Aorta (tissue), 5 donors: ENCODE measurements at regions of chr2 and their contacts with region 1.

Region 1: DNA sequence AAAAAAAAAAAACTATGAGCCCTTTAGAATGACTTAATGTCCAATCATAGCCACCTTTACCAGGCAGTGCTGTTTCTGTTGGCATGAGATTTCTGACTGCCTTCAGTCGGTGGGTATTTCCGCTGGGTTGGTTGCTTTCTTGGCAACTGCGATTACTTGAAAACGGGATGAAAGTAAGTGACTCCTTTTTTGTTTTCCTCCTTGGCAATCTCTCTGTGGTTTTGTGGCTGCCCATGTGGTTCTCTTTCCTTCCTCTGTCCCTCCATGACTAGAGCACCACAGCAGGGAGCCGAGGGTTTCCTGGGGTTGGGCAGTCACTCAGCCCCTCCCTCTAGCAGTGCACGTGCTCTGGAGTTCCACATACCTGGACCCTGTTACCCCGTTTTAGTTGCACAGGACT is 112.1 kb downstream of the KLHL29 start:
- DNase-seq: peak; percentile 70
- ATAC-seq: peak; percentile 62
- H3K4me3 ChIP-seq: no peak overlapping the region
- H3K27ac ChIP-seq: peak overlapping the region in 1 of 2 donors; percentile 72
- H3K4me1 ChIP-seq: peaks cover 0 to 14% of the 10 kb centered on the region in 2 donors
- H3K27me3 ChIP-seq: no peaks in the 10 kb centered on the region

Region 2: GRCh38 chr2:23384551-23385349 is 112.3 kb before region 1 on chr2 and contains the start of gene KLHL29:
- intact Hi-C with region 1: loop called in 1 of 2 experiments (anchors 10 kb)
- DNase-seq: peak; percentile 90 to 96
- ATAC-seq: peak; percentile 77
- H3K4me3 ChIP-seq: peak within 1 kb of the TSS; percentile 45 to 92
- H3K27ac ChIP-seq: peak within 1 kb of the TSS in 1 of 2 donors; percentile 23
- H3K4me1 ChIP-seq: no peaks in the 10 kb centered on the region
- H3K27me3 ChIP-seq: no peaks in the 10 kb centered on the region
- total RNA-seq, gene KLHL29: 11.4 to 13.4 TPM

Region 3: DNA sequence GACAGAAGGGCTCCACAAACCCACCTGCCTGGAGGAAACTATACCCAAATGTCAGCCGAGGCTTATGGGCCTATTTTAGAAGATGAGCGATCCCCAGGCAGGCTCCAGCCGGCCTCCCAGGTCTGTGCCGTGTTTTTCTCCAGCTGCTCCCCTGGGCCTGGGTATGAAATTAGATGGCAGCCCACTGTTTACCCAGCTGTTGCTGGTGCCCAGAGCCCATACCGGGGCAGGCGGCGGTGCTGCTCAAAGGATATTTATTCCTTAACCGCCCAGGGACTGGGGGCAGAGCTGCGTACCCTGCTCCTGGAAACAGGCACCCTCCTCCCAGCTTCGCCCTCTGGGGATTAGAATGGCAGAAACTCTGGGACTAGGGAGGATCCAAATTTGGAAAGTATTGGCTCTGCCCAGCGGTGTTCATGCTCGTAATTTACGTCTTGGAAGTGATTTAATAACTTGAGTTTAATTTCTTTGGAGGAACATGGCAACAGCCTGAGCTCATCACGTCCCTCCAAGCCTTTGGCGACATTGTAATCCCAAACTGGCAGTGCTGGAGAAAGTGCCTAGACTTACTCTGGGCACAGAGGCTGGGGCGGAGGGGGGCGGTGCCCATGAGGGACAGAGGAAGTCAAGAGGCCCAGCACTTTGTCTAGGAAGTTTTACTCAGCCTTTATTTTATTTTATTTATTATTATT is 87.1 kb after region 1 on chr2:
- intact Hi-C with region 1: loop called in 1 of 2 experiments (anchors 5 kb)
- DNase-seq: peak; percentile 76 to 88
- ATAC-seq: peak; percentile 89
- H3K4me3 ChIP-seq: no peak overlapping the region
- H3K27ac ChIP-seq: peak overlapping the region; percentile 16 to 49
- H3K4me1 ChIP-seq: no peaks in the 10 kb centered on the region
- H3K27me3 ChIP-seq: no peaks in the 10 kb centered on the region